Naive thymus-derived CD4-positive, alpha-beta T cell (primary cell): ENCODE measurements at regions of chr4 and their contacts with region 1.

Region 1: GRCh38 chr4:109826719-109827118 is 1.1 kb upstream of the RRH start:
- DNase-seq: peak in 6 of 9 donors; percentile 14 to 46 (median 27)
- ATAC-seq: peak; percentile 73
- H3K4me3 ChIP-seq: no peak overlapping the region
- H3K4me3 Mint-ChIP-seq: no peak overlapping the region
- H3K27ac ChIP-seq: no peak overlapping the region
- H3K27ac Mint-ChIP-seq: no peak overlapping the region
- H3K4me1 ChIP-seq: no peaks in the 10 kb centered on the region
- H3K4me1 Mint-ChIP-seq: peaks cover 0 to 3% (median 0%) of the 10 kb centered on the region in 7 donors
- H3K27me3 ChIP-seq: no peaks in the 10 kb centered on the region
- H3K27me3 Mint-ChIP-seq: no peaks in the 10 kb centered on the region

Region 2: GRCh38 chr4:109424093-109424841 is 402.5 kb before region 1 on chr4:
- CTCF ChIA-PET with region 1: interaction called, 13 read pairs
- POLR2A ChIA-PET with region 1: no interaction called
- intact Hi-C with region 1: loop called (anchors 1 kb)
- DNase-seq: no peak
- ATAC-seq: no peak
- H3K4me3 ChIP-seq: no peak overlapping the region
- H3K4me3 Mint-ChIP-seq: no peak overlapping the region
- H3K27ac ChIP-seq: no peak overlapping the region
- H3K27ac Mint-ChIP-seq: no peak overlapping the region
- H3K4me1 ChIP-seq: no peaks in the 10 kb centered on the region
- H3K4me1 Mint-ChIP-seq: peaks cover 4 to 7% (median 5%) of the 10 kb centered on the region in 7 donors
- H3K27me3 ChIP-seq: no peaks in the 10 kb centered on the region
- H3K27me3 Mint-ChIP-seq: peaks cover 0 to 10% (median 0%) of the 10 kb centered on the region in 5 donors